ENCODE measurements at regions of chr12 and their contacts with region 1.

Region 1: DNA sequence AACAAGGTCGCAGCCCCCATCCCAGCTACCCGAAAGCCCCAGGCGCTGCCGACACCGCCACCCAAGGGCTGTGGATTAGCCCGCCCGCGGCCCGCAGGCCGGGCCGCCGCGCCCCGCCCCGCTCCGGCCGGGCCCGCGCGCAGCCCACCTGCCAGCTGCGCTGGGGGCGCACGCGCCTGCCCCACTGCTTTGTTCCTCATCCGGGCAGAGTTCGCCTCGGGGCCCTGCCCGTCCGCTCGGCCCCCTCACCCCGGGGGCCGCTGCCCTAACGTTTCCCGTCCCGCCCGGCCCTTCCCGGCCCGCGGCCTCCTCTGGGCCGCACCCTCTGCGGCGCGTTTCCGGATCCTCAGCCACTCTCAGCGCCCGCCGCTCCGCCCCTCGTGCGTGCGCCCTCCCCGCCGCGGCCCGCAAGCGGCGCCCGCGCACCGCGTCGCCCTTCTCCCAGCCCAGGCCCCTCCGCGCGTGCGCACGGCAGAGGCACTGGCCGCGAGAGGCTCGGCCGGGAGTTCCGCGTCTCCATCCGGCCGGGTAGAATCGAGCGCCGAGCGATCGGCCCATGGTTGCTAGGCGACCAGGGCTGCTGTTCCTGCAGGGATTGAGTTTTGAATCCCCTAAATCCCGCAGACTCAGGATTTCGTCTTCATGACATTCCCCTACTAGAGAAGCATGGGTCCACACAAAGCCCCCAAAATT is at the start of gene PRDM4:
- DNase-seq: peak; percentile 75 to 98 (median 88)
- ATAC-seq: peak; percentile 91
- H3K4me3 ChIP-seq: peak within 1 kb of the TSS; percentile 78
- H3K4me3 Mint-ChIP-seq: peak within 1 kb of the TSS; percentile 96
- H3K27ac ChIP-seq: peak within 1 kb of the TSS; percentile 51 to 77
- H3K27ac Mint-ChIP-seq: peak within 1 kb of the TSS; percentile 87
- H3K4me1 ChIP-seq: peaks cover 26% of the 10 kb centered on the region
- H3K4me1 Mint-ChIP-seq: peaks cover 48% of the 10 kb centered on the region
- H3K27me3 ChIP-seq: no peaks in the 10 kb centered on the region
- H3K27me3 Mint-ChIP-seq: no peaks in the 10 kb centered on the region
- CTCF ChIP-seq: no peak
- total RNA-seq, gene PRDM4: 40.2 to 44.0 TPM

Region 2: GRCh38 chr12:106774005-106774807 is 986.7 kb before region 1 on chr12 and contains the start of gene RIC8B:
- CTCF ChIA-PET with region 1: no interaction called
- POLR2A ChIA-PET with region 1: no interaction called
- intact Hi-C with region 1: loop called in 1 of 2 experiments (anchors 5 kb)
- DNase-seq: peak; percentile 51 to 91 (median 72)
- ATAC-seq: peak; percentile 82
- H3K4me3 ChIP-seq: peak within 1 kb of the TSS; percentile 89
- H3K4me3 Mint-ChIP-seq: peak within 1 kb of the TSS; percentile 98
- H3K27ac ChIP-seq: peak within 1 kb of the TSS; percentile 80 to 90
- H3K27ac Mint-ChIP-seq: peak within 1 kb of the TSS; percentile 97
- H3K4me1 ChIP-seq: peaks cover 31% of the 10 kb centered on the region
- H3K4me1 Mint-ChIP-seq: peaks cover 42% of the 10 kb centered on the region
- H3K27me3 ChIP-seq: no peaks in the 10 kb centered on the region
- H3K27me3 Mint-ChIP-seq: no peaks in the 10 kb centered on the region
- CTCF ChIP-seq: no peak
- total RNA-seq, gene RIC8B: 5.5 to 9.0 TPM

Region 3: GRCh38 chr12:106986625-106987430 is 774.1 kb before region 1 on chr12 and contains the start of gene MTERF2:
- CTCF ChIA-PET with region 1: no interaction called
- POLR2A ChIA-PET with region 1: no interaction called
- intact Hi-C with region 1: loop called in 1 of 2 experiments (anchors 10 kb)
- DNase-seq: peak; percentile 61 to 91 (median 71)
- ATAC-seq: peak; percentile 94
- H3K4me3 ChIP-seq: peak within 1 kb of the TSS; percentile 87
- H3K4me3 Mint-ChIP-seq: peak within 1 kb of the TSS; percentile 97
- H3K27ac ChIP-seq: peak within 1 kb of the TSS in 1 of 2 donors; percentile 41
- H3K27ac Mint-ChIP-seq: peak within 1 kb of the TSS; percentile 78
- H3K4me1 ChIP-seq: peaks cover 27% of the 10 kb centered on the region
- H3K4me1 Mint-ChIP-seq: peaks cover 50% of the 10 kb centered on the region
- H3K27me3 ChIP-seq: no peaks in the 10 kb centered on the region
- H3K27me3 Mint-ChIP-seq: no peaks in the 10 kb centered on the region
- CTCF ChIP-seq: no peak
- total RNA-seq, gene MTERF2: 6.1 to 7.6 TPM

Region 4: GRCh38 chr12:107685360-107686248 is 75.4 kb before region 1 on chr12 and contains the start of gene PWP1:
- CTCF ChIA-PET with region 1: no interaction called
- POLR2A ChIA-PET with region 1: interaction called, 4 read pairs
- intact Hi-C with region 1: loop called in 1 of 2 experiments (anchors 2 kb)
- DNase-seq: peak; percentile 91 to 99 (median 94)
- ATAC-seq: peak; percentile 90
- H3K4me3 ChIP-seq: peak within 1 kb of the TSS; percentile 99
- H3K4me3 Mint-ChIP-seq: peak within 1 kb of the TSS; percentile 97
- H3K27ac ChIP-seq: peak within 1 kb of the TSS; percentile 75 to 91
- H3K27ac Mint-ChIP-seq: peak within 1 kb of the TSS; percentile 94
- H3K4me1 ChIP-seq: peaks cover 24% of the 10 kb centered on the region
- H3K4me1 Mint-ChIP-seq: peaks cover 33% of the 10 kb centered on the region
- H3K27me3 ChIP-seq: no peaks in the 10 kb centered on the region
- H3K27me3 Mint-ChIP-seq: no peaks in the 10 kb centered on the region
- CTCF ChIP-seq: no peak
- total RNA-seq, gene PWP1: 24.1 to 24.2 TPM

Region 5: GRCh38 chr12:108856428-108857157 is 1095.6 kb after region 1 on chr12:
- CTCF ChIA-PET with region 1: no interaction called
- POLR2A ChIA-PET with region 1: no interaction called
- intact Hi-C with region 1: loop called in 1 of 2 experiments (anchors 2 kb)
- DNase-seq: peak in 13 of 14 experiments; percentile 35 to 92 (median 58)
- ATAC-seq: peak; percentile 75
- H3K4me3 ChIP-seq: peak overlapping the region; percentile 72
- H3K4me3 Mint-ChIP-seq: peak overlapping the region; percentile 95
- H3K27ac ChIP-seq: peak overlapping the region in 1 of 2 donors; percentile 22
- H3K27ac Mint-ChIP-seq: peak overlapping the region; percentile 90
- H3K4me1 ChIP-seq: peaks cover 36% of the 10 kb centered on the region
- H3K4me1 Mint-ChIP-seq: peaks cover 42% of the 10 kb centered on the region
- H3K27me3 ChIP-seq: no peaks in the 10 kb centered on the region
- H3K27me3 Mint-ChIP-seq: no peaks in the 10 kb centered on the region
- CTCF ChIP-seq: no peak

Measured in CD4-positive, alpha-beta T cell (primary cell).